Activated naive CD4-positive, alpha-beta T cell treated with anti-CD3 and anti-CD28 coated beads for 36 hours (primary cell): ENCODE measurements at regions of chr13 and their contacts with region 1.

Region 1: DNA sequence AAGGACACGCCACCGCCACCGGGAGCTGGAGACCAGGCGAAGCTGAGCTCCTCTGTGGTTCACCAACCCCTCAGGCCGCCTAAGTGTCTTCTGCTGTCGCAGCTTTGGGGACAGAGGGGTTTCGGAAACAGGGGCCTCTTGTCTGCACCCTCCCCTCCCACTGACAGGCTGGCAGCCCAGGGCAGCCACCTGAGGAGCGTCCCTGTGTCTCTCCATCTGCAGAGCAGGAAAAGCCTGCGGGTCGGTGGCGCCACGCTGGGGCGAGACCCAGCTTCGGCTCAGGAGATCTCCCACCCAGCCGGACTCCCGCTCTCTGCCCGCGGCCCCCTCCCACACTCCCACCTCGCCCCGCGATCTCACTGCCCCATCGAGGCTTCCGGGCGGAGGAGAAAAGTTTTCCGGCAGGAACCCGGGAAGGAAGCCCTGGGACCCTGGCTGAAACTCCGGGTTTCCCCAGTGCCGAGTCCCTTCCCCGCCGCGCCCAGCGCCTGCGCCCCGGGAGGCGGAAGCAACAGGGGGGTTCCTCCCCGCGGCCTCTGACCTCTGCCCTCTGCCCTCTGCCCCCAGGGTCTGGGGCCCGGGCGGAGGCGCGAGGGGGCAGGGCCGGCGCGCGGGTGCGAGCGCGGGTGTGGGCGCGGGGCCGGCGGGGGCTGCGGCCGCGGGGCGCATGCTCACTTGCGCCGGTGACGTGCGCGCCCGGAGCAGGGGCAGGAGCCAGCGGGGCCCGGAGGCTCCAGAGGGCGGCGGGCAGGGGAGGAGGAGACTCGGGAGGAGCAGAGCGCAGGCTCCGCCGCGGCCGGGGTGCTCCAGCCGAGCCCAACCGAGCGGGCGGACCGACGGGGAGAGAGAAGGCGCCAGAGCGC is at the start of gene ATP11A:
- DNase-seq: peak; percentile 77
- H3K4me3 Mint-ChIP-seq: peak within 1 kb of the TSS; percentile 78
- H3K27ac Mint-ChIP-seq: peak within 1 kb of the TSS; percentile 80
- H3K4me1 Mint-ChIP-seq: peaks cover 45% of the 10 kb centered on the region
- H3K27me3 Mint-ChIP-seq: no peaks in the 10 kb centered on the region
- total RNA-seq, gene ATP11A: 24.7 to 25.6 TPM

Region 2: DNA sequence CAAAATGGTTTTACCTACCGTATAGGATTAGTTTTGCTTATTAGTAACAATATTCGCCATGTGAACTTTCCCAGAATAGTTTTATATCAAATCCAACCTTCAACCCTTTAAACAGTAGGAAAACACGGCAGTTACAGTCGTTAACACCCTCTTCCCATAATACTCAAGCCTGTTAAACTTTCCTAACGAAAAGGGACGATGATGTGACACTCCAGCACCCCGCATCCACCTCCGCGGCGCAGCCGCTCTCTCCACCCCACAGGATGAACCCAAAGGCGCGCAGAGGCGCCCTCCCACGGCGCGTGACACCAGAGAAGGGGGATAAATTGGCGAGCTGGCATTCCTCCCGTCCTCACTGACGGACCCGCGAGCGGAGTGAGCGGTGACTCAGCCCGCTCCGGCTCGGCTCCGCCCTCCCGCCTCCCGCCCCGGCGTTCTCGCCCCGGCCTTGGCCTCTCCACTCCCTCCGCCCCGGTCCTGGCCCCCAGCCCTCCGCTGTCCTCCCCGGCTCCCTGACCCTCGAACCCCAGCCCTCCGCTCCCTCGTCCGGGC is 102.2 kb before region 1 on chr13:
- CTCF ChIA-PET with region 1: no interaction called
- intact Hi-C with region 1: loop called (anchors 1 kb)
- DNase-seq: peak; percentile 78
- H3K4me3 Mint-ChIP-seq: peak overlapping the region; percentile 96
- H3K27ac Mint-ChIP-seq: peak overlapping the region; percentile 93
- H3K4me1 Mint-ChIP-seq: peaks cover 47% of the 10 kb centered on the region
- H3K27me3 Mint-ChIP-seq: no peaks in the 10 kb centered on the region

Region 3: GRCh38 chr13:112638157-112638750 is 51.3 kb before region 1 on chr13:
- CTCF ChIA-PET with region 1: interaction called, 6 read pairs
- intact Hi-C with region 1: loop called (anchors 1 kb)
- DNase-seq: no peak
- H3K4me3 Mint-ChIP-seq: no peak overlapping the region
- H3K27ac Mint-ChIP-seq: no peak overlapping the region
- H3K4me1 Mint-ChIP-seq: peaks cover 5% of the 10 kb centered on the region
- H3K27me3 Mint-ChIP-seq: peaks cover 19% of the 10 kb centered on the region

Region 4: GRCh38 chr13:112674412-112675365 is 14.8 kb before region 1 on chr13:
- CTCF ChIA-PET with region 1: no interaction called
- intact Hi-C with region 1: loop called (anchors 1 kb)
- DNase-seq: peak; percentile 16
- H3K4me3 Mint-ChIP-seq: no peak overlapping the region
- H3K27ac Mint-ChIP-seq: no peak overlapping the region
- H3K4me1 Mint-ChIP-seq: peaks cover 25% of the 10 kb centered on the region
- H3K27me3 Mint-ChIP-seq: no peaks in the 10 kb centered on the region

Region 5: DNA sequence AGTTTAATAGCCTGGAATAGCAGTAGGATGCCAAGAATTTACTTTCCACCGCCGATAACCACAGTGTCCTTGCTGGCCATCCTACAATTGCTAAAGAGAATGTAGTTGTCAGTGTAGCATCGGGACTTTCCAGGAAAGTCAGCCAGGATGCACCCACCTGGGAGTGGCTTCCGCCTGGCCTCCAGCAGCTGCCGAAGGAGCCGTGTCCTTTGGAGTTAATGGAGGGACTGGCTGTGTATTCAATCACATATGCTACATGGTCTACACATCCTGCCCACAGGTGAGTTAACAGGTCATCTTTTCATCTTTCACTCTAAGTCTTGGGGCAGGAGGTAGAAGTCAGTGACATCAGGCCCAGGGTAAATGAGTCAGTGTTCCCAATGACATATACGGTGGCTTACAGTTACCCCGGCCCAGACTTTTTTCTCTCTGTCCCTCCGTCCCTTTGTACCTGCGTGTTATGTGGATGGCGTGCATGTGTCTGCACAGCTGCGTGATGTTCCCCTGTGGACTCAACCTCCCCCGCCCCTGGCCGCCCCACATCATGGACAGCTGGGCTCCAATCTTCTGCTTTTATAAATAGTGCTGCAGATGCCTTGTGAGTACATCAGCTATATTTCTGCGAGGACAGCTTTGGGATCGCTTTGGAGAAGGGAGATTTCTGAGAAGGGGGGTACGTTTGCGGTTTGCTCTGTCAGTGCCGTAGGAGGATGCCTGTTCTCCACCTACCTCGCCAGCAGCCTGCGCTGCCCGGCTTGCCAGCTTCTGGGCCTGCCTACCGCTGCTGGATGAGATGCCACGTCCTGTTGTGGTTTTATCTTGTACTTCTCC is 63.4 kb after region 1 on chr13:
- CTCF ChIA-PET with region 1: no interaction called
- intact Hi-C with region 1: loop called (anchors 1 kb)
- DNase-seq: peak; percentile 59
- H3K4me3 Mint-ChIP-seq: peak overlapping the region; percentile 2
- H3K27ac Mint-ChIP-seq: peak overlapping the region; percentile 11
- H3K4me1 Mint-ChIP-seq: peaks cover 24% of the 10 kb centered on the region
- H3K27me3 Mint-ChIP-seq: no peaks in the 10 kb centered on the region

Region 6: GRCh38 chr13:112873851-112874750 is 184.6 kb after region 1 on chr13:
- CTCF ChIA-PET with region 1: interaction called, 4 read pairs
- intact Hi-C with region 1: loop called (anchors 1 kb)
- DNase-seq: peak; percentile 88
- H3K4me3 Mint-ChIP-seq: peak overlapping the region; percentile 47
- H3K27ac Mint-ChIP-seq: peak overlapping the region; percentile 92
- H3K4me1 Mint-ChIP-seq: peaks cover 19% of the 10 kb centered on the region
- H3K27me3 Mint-ChIP-seq: no peaks in the 10 kb centered on the region